ENCODE measurements at regions of chr17 and their contacts with region 1.

Region 1: GRCh38 chr17:39235555-39236449 is 10.1 kb upstream of the STAC2 start:
- DNase-seq: peak in 1 of 2 donors; percentile 39
- H3K4me3 ChIP-seq: no peak overlapping the region
- H3K27ac ChIP-seq: no peak overlapping the region
- H3K4me1 ChIP-seq: peaks cover 0 to 36% (median 26%) of the 10 kb centered on the region in 4 donors
- H3K27me3 ChIP-seq: peaks cover 0 to 8% of the 10 kb centered on the region in 2 donors
- CTCF ChIP-seq: peak; percentile 26 to 34

Region 2: GRCh38 chr17:39094607-39095308 is 141.0 kb before region 1 on chr17:
- intact Hi-C with region 1: no loop called
- DNase-seq: no peak
- H3K4me3 ChIP-seq: no peak overlapping the region
- H3K27ac ChIP-seq: no peak overlapping the region
- H3K4me1 ChIP-seq: peaks cover 0 to 19% (median 4%) of the 10 kb centered on the region in 4 donors
- H3K27me3 ChIP-seq: no peaks in the 10 kb centered on the region
- CTCF ChIP-seq: no peak

Region 3: GRCh38 chr17:39164675-39165143 is 71.1 kb before region 1 on chr17:
- intact Hi-C with region 1: loop called (anchors 10 kb)
- DNase-seq: peak; percentile 90 to 96
- H3K4me3 ChIP-seq: peak overlapping the region; percentile 43 to 60
- H3K27ac ChIP-seq: peak overlapping the region in 1 of 2 donors; percentile 16
- H3K4me1 ChIP-seq: peaks cover 0 to 26% (median 13%) of the 10 kb centered on the region in 4 donors
- H3K27me3 ChIP-seq: no peaks in the 10 kb centered on the region
- CTCF ChIP-seq: peak; percentile 74 to 85

Region 4: GRCh38 chr17:39199820-39200069 is 36.1 kb before region 1 on chr17:
- intact Hi-C with region 1: loop called (anchors 5 kb)
- DNase-seq: peak; percentile 94 to 95
- H3K4me3 ChIP-seq: peak overlapping the region; percentile 81 to 83
- H3K27ac ChIP-seq: peak overlapping the region; percentile 98 to 100
- H3K4me1 ChIP-seq: peaks cover 0 to 51% (median 44%) of the 10 kb centered on the region in 4 donors
- H3K27me3 ChIP-seq: no peaks in the 10 kb centered on the region
- CTCF ChIP-seq: no peak

Region 5: DNA sequence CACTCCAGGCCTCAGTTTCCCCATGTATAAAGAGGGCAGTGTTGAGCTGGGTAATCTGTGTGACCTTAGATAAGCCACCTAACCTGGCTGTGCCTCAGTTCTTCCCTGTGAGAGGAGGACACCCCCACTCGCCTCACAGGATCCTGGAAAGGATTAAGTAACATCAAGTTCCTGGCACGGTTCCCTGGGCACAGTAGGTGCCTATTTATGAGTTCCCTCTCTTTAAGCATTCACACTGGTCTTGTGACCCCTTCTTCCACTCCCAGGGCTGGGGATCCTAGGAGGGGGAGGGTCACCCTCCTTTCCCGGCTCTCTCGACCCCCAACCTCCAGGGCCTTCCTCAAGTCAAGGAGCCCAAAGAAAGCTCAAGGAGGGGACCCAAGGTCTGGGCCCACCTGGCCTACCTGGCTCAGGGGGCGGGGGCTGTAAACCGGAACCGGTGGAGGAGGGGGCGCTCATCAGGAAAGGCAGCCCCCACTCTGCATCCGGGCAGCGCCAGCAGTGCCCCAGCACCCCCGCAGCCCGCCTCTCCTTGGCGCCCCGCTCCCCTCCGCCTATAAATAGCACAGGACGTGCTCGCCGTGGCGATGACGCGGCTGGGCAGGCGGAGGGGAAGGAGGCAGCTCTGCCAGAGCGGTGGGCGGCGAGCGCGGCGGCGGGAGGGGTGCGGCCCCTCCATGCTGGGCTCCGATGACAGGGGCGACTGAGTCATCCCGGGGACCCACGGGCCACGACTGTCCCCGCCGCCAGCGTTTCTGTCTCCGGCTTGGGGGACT is 26.3 kb before region 1 on chr17:
- intact Hi-C with region 1: loop called (anchors 2 kb)
- DNase-seq: peak; percentile 91 to 96
- H3K4me3 ChIP-seq: peak overlapping the region; percentile 41 to 50
- H3K27ac ChIP-seq: peak overlapping the region; percentile 80 to 93
- H3K4me1 ChIP-seq: peaks cover 0 to 74% (median 61%) of the 10 kb centered on the region in 4 donors
- H3K27me3 ChIP-seq: no peaks in the 10 kb centered on the region
- CTCF ChIP-seq: no peak

Region 6: DNA sequence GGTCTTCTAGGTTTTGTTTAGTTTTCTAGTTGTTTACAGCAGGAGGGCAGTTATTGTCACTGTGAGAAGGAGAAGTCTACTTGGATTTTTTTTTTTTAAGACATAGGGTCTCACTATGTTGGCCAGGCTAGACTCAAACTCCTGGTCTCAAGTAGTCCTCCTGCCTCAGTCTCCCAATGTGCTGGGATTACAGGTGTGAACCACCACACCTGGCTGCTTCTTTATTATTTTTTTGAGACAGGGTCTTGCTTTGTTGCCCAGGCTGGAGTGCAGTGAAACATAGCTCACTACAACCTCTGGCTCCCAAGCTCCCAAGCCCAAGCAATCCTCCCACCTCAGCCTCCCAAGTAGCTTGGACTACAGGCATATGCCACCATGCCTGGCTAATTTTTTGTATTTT is 58.3 kb after region 1 on chr17:
- intact Hi-C with region 1: no loop called
- DNase-seq: no peak
- H3K4me3 ChIP-seq: no peak overlapping the region
- H3K27ac ChIP-seq: no peak overlapping the region
- H3K4me1 ChIP-seq: no peaks in the 10 kb centered on the region
- H3K27me3 ChIP-seq: no peaks in the 10 kb centered on the region
- CTCF ChIP-seq: no peak

Measured in tibial artery (tissue), 4 donors.